Posterior vena cava (tissue), 2 donors: ENCODE measurements at regions of chr13 and their contacts with region 1.

Region 1: GRCh38 chr13:111031531-111031961 is 83.6 kb upstream of the ARHGEF7 start:
- DNase-seq: no peak

Region 2: DNA sequence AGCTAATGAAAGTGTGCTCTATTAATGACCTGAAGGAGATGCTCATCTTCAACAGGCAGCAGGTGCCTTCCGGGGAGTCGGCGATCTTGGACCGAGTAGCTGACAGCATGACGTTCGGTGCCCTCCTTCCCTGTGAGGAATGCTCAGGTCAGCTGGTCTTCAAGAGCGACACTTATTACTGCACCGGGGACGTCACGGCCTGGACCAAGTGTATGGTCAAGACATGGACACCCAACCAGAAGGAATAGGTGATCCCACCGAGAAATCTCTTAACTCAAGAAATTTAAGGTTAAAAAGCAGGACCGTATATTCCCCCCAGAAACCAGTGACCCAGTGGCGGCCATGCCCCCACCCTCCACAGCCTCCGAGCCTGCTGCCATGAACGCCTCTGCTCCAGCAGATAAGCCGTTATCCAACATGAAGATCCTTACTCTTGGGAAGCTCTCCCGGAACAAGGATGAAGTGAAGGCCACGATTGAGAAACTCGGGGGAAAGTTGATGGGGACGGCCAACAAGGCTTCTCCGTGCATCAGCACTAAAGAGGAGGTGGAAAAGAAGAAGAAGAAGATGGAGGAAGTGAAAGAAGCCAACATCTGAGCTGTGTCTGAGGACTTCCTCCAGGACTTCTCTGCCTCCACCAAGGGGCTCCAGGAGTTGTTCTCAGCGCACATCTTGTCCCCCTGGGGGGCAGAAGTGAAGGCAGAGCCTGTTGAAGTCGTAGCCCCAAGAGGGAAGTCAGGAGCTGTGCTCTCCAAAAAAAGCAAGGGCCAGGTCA is 93.8 kb before region 1 on chr13:
- intact Hi-C with region 1: loop called in 1 of 2 experiments (anchors 10 kb)
- DNase-seq: no peak

Region 3: GRCh38 chr13:111011899-111012298 is 19.6 kb before region 1 on chr13:
- intact Hi-C with region 1: no loop called
- DNase-seq: no peak

Region 4: DNA sequence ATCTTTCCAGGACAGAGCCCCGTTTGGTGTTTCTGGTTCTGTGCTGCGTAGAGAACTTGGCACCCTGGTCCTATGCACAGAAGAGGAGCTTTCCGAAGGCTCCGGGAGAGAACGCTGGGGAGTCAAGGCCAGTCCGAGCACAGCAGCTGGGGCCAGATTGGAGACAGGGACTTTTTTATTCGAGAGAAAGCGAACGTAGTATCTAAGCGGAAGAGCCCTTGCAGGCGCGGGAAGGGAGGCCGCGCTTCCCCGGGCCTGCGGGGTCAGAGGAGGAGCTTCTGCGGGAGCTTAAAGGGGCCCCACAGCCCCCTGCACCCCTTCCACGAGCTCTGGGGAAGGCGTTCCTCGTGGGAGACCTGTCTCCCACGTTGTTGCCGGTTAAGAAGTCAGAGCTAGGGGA is 35.0 kb after region 1 on chr13:
- intact Hi-C with region 1: no loop called
- DNase-seq: no peak